Posterior cingulate gyrus (tissue), 11 donors: ENCODE measurements at regions of chr11 and their contacts with region 1.

Region 1: DNA sequence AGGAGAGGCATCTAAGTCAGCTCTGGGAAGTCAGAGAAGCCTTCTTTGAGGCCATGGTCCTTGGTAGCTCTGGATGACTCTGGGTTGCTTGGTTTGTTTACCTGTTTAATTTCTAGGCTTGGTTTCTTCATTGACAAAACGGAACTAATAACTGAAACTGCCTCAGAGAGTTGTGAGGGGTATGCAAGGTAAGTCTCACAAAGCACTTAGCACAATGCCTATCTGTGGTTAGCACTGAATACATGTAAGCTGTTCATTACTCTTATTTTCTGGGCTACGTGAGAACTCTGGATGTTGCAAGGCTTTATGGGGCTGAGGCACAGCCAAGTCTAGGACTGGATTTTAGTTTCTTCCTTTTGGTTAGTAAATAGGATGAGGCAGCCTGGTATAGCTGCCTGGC is 225.8 kb upstream of the NCAM1 start:
- DNase-seq: no peak

Region 2: DNA sequence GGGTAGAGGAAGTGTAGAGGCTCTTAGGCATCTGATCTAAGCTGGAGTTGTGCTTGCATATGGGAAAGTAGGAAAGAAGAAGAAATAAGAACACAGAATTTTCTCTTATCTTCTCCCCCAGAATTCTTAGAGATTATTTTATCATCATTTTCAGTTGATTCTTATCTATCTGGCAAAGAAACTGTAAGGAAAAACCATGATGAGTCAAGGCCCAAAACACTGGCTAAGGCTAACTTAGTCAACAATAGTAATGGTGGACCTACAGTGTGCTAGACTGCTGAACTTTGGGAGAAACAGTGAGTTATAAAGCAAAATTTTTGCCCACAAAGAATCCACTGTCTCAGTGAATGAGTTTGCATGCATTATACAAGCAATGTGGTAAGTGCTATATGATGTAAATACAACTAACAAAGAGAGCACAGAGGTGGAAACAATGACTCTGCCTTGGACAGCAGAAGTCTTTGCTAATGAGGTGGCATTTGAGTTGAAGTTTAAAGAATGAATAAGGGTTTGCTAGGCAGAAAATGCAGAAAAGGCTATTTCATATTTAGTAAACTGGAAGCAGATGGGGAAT is 130.3 kb before region 1 on chr11:
- intact Hi-C with region 1: no loop called
- DNase-seq: no peak

Region 3: DNA sequence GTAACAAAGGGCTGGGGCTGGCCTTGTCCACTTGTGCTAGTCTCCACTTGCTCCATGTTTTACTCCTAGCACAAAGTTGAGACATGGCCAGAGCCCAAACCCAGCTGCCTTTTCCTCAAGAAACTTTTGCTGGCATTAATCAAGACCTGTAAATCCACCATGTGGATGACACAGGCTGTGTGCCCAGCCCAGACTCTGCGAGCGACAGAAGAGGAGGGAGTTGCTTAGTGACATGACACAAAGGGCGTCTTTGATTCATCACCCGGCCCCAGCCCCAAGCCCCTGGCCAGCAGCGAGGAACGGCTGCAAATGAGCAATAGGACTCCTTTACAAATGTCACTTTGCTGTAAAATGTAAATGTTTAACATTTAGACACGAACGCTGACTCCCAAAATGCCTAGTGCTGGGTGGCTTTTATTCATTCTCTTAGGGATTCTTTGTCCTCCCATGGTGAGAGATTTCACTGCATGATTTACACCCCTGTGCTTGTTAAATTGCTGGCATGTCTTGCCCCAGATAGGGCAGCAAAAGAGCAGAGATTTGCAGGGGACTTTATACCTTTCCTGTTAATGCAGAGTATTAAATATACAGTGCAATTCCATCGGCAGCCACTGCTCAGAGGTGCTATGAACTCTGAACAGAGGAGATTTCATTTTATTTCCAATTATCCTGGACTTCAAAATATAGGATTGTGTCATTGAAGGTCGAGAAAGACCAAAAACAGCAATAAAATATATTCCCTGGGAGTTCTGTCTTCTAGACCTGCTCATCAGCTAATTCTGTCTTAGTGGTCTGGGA is 37.9 kb before region 1 on chr11:
- intact Hi-C with region 1: loop called (anchors 5 kb)
- DNase-seq: peak; percentile 63 to 97 (median 78)